ENCODE measurements at regions of chr6 and their contacts with region 1.

Region 1: DNA sequence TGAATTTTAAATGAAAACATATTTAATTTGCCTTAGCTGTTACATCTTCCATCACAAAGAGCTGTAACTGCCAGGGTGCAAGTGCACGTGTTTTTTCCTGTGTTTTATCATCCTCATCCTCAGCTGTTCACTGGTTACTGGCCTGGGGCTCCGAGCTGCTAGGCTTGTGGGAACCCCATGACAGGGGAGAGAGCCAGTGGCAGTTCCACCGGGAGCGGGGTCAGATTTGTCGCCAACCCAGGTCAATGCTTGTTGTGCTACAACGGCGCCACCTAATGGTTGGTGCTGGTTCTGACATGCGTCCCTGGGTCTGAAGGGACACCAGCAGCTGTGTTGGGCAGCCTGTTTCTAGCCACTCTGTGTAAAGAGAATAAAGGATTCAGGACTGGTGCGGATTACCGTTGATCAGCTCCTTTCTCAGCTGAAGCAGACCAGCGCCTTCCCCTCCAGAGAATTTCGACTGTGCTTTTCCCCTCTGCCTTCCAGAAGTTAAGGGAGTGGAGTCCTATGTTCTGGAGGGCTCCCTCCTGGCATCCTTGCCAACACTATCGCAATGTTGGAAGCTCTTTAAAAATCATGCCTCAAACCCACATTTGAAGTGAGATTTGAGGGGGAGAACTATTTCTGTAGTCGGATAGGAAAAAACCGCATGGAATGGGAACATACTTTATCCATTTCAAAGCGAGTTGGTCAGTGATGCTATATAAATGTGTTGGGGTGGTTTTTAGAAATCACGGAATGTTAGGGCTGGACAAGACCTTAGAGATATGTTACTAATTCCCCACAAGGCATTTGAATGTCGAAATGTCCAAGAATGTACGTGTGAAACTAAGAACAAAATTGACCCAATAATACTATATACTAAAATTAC is 32.1 kb downstream of the SUMO4 start:
- DNase-seq: peak; percentile 52 to 79
- H3K4me3 ChIP-seq: no peak overlapping the region
- H3K27ac ChIP-seq: no peak overlapping the region
- H3K4me1 ChIP-seq: no peaks in the 10 kb centered on the region; the same call in 1 of the 2 replicates
- H3K27me3 ChIP-seq: no peaks in the 10 kb centered on the region
- CTCF ChIP-seq: peak; percentile 95

Region 2: DNA sequence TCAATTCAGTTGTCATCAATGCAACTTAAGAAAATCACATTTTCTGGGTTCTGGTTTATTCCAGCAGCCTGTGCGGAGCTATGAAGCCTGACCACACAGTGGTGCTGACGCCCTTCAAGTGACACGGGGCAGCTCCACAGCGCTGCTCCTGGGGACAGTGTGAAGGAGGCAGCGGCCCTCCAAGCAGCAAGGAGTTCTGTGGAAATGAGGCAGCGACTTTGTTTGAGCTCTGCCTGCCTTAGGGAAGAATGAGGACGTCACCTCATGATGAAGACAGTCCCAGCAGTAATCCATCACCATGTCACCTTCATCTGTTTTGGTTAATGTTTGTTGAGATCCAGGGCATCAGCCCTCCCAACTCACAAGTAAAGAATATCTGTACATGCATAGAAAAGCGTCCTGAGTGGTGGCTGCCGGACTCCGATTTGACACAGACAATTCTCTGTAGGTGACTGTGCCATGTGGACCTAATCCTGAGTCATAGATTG is 853.9 kb before region 1 on chr6:
- CTCF ChIA-PET with region 1: interaction called, 3 read pairs
- POLR2A ChIA-PET with region 1: no interaction called
- intact Hi-C with region 1: loop called (anchors 1 kb)
- DNase-seq: peak; percentile 37 to 56
- H3K4me3 ChIP-seq: no peak overlapping the region
- H3K27ac ChIP-seq: no peak overlapping the region
- H3K4me1 ChIP-seq: no peaks in the 10 kb centered on the region
- H3K27me3 ChIP-seq: peaks cover 5% of the 10 kb centered on the region; the same call in 1 of the 2 replicates
- CTCF ChIP-seq: peak; percentile 82

Region 3: GRCh38 chr6:149082286-149082707 is 349.8 kb before region 1 on chr6:
- CTCF ChIA-PET with region 1: no interaction called
- POLR2A ChIA-PET with region 1: no interaction called
- intact Hi-C with region 1: loop called (anchors 1 kb)
- DNase-seq: peak; percentile 49 to 65
- H3K4me3 ChIP-seq: no peak overlapping the region
- H3K27ac ChIP-seq: no peak overlapping the region
- H3K4me1 ChIP-seq: peaks cover 30% of the 10 kb centered on the region
- H3K27me3 ChIP-seq: no peaks in the 10 kb centered on the region
- CTCF ChIP-seq: peak; percentile 81

Region 4: DNA sequence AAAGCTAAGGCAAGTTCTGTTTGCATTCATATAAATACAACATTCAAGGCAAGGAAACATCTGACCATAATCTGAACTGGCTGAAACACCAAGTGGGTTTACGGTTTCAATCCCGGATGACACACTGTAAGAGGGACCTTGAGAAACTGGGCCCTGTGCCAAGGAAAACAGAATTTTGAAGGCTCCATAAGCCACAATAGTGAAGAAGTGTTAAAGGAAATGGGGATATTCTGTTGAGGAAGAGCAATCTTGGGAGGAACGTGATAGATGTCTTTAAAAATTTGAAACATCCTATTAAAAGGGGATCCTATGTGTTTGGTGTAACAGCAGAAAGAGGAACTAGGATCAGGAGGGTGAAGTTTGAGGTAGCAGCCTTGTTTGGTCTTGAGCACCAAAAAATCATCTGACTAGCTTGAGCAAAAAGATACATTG is 197.0 kb before region 1 on chr6:
- CTCF ChIA-PET with region 1: no interaction called
- POLR2A ChIA-PET with region 1: no interaction called
- intact Hi-C with region 1: loop called (anchors 10 kb)
- DNase-seq: peak; percentile 48 to 75
- H3K4me3 ChIP-seq: no peak overlapping the region
- H3K27ac ChIP-seq: peak overlapping the region; percentile 87
- H3K4me1 ChIP-seq: peaks cover 45% of the 10 kb centered on the region
- H3K27me3 ChIP-seq: no peaks in the 10 kb centered on the region
- CTCF ChIP-seq: no peak

Region 5: GRCh38 chr6:149316798-149317655 is 115.1 kb before region 1 on chr6:
- CTCF ChIA-PET with region 1: no interaction called
- POLR2A ChIA-PET with region 1: no interaction called
- intact Hi-C with region 1: loop called (anchors 5 kb)
- DNase-seq: peak; percentile 74 to 78
- H3K4me3 ChIP-seq: peak overlapping the region; percentile 98
- H3K27ac ChIP-seq: peak overlapping the region; percentile 75
- H3K4me1 ChIP-seq: peaks cover 34% of the 10 kb centered on the region
- H3K27me3 ChIP-seq: no peaks in the 10 kb centered on the region
- CTCF ChIP-seq: no peak

Region 6: GRCh38 chr6:149499066-149499465 is 66.9 kb after region 1 on chr6:
- CTCF ChIA-PET with region 1: no interaction called
- POLR2A ChIA-PET with region 1: no interaction called
- intact Hi-C with region 1: loop called (anchors 5 kb)
- DNase-seq: no peak
- H3K4me3 ChIP-seq: no peak overlapping the region
- H3K27ac ChIP-seq: no peak overlapping the region
- H3K4me1 ChIP-seq: no peaks in the 10 kb centered on the region
- H3K27me3 ChIP-seq: no peaks in the 10 kb centered on the region
- CTCF ChIP-seq: no peak

Region 7: GRCh38 chr6:149513915-149514314 is 81.8 kb after region 1 on chr6:
- CTCF ChIA-PET with region 1: interaction called, 5 read pairs
- POLR2A ChIA-PET with region 1: no interaction called
- intact Hi-C with region 1: loop called (anchors 2 kb)
- DNase-seq: no peak
- H3K4me3 ChIP-seq: no peak overlapping the region
- H3K27ac ChIP-seq: no peak overlapping the region
- H3K4me1 ChIP-seq: no peaks in the 10 kb centered on the region
- H3K27me3 ChIP-seq: no peaks in the 10 kb centered on the region
- CTCF ChIP-seq: no peak

Region 8: GRCh38 chr6:150320442-150320841 is 888.3 kb after region 1 on chr6:
- CTCF ChIA-PET with region 1: no interaction called
- POLR2A ChIA-PET with region 1: no interaction called
- intact Hi-C with region 1: no loop called
- DNase-seq: no peak
- H3K4me3 ChIP-seq: no peak overlapping the region
- H3K27ac ChIP-seq: no peak overlapping the region
- H3K4me1 ChIP-seq: peaks cover 11% of the 10 kb centered on the region; the same call in 1 of the 2 replicates
- H3K27me3 ChIP-seq: no peaks in the 10 kb centered on the region
- CTCF ChIP-seq: no peak

Measured in PC-9 (cell line).